ENCODE measurements at regions of chr5 and their contacts with region 1.

Region 1: GRCh38 chr5:176887252-176887849 is 11.8 kb downstream of the HK3 start:
- DNase-seq: no peak
- H3K4me3 ChIP-seq: no peak overlapping the region
- H3K27ac ChIP-seq: no peak overlapping the region
- H3K4me1 ChIP-seq: no peaks in the 10 kb centered on the region
- H3K27me3 ChIP-seq: no peaks in the 10 kb centered on the region
- CTCF ChIP-seq: peak in 2 of 3 experiments; percentile 45 to 50; a peak in 2 of 4 replicates
- EP300 ChIP-seq: no peak
- POLR2A ChIP-seq: no peak
- RAD21 ChIP-seq: peak; percentile 58 to 69

Region 2: DNA sequence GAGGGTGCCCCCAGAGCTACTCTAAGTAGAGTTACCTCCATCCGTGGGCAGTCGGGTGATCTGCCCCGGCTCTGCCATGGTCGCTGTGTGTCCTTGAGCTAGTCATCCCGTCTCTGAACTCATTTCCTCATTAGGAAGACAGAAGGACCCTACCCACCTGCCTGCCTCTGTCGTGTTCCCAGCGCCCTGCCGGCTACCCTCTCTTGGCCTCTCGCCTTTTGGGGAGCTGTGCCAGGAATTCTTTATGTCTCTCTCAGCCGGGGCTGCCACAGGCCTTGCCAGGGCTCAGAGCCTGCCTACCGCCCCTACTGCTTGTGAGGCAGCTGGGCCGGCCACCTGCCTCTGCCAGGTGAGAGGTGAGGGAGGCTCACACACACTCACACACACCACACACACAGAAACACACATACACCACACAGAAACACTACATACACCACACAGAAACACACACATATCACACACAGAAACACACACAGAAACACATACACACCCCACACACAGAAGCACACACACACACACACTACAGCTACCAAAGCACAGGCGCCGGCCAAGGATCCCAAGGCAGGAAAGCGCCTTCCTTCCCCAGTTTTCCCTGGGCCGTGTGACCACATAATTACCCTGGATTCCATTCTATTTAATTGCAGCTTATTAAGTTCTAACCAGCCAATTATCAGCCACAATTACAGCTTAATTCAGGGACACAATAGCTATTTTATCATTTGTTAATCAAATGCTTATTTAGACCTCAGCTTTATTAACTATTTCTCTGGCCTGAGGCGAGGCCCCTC is 35.3 kb before region 1 on chr5:
- CTCF ChIA-PET with region 1: no interaction called
- POLR2A ChIA-PET with region 1: no interaction called
- DNase-seq: no peak
- H3K4me3 ChIP-seq: no peak overlapping the region
- H3K27ac ChIP-seq: no peak overlapping the region; the same call in 1 of the 2 replicates
- H3K4me1 ChIP-seq: peaks cover 0 to 1% (median under 1%) of the 10 kb centered on the region in 4 experiments; a peak in 2 of 7 replicates
- H3K27me3 ChIP-seq: no peaks in the 10 kb centered on the region
- CTCF ChIP-seq: no peak
- EP300 ChIP-seq: no peak
- POLR2A ChIP-seq: no peak
- RAD21 ChIP-seq: no peak

Region 3: GRCh38 chr5:176875783-176876505 is 11.4 kb before region 1 on chr5:
- CTCF ChIA-PET with region 1: interaction called, 34 read pairs
- POLR2A ChIA-PET with region 1: interaction called, 4 read pairs
- DNase-seq: no peak
- H3K4me3 ChIP-seq: no peak overlapping the region
- H3K27ac ChIP-seq: no peak overlapping the region
- H3K4me1 ChIP-seq: peaks cover 0 to 4% (median 1%) of the 10 kb centered on the region in 4 experiments; a peak in 3 of 7 replicates
- H3K27me3 ChIP-seq: no peaks in the 10 kb centered on the region
- CTCF ChIP-seq: no peak
- EP300 ChIP-seq: no peak
- POLR2A ChIP-seq: no peak
- RAD21 ChIP-seq: no peak

Region 4: DNA sequence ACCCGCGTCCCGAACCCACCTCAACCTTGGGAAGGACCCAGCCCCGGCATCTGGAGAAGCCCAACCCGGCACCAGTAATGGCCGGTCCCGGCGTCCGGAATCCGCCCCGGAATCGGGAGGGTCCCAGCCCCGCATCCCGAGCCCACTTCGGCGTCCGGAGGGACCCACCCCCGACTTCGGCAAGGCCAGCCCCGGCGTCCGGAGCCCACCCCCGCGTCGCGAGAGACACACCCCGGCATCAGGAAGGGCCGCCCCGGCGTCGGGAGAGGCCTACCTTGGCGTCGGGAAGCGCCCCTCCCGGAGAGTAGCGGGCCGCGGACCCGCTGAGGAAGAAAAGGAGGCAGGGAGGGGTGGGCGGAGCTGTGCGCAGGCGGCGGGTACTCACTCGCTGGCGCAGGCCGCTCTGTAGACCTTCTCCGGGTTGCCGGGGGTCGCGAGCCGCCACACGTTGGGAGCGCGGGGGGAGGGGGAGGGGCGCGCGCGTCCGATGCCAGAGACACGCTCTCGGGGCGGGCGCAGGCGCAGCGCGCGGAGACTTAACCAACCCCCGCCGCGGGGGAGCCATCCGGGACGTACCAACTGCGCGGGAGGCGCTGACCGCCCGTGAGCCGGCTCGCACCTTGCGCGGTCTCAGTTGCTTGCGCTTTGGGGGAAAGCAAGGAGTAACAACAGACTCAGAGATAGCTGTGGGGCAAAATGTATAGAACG is 119.1 kb after region 1 on chr5 and contains the start of gene UIMC1:
- CTCF ChIA-PET with region 1: no interaction called
- POLR2A ChIA-PET with region 1: no interaction called
- DNase-seq: peak; percentile 83 to 99
- H3K4me3 ChIP-seq: peak within 1 kb of the TSS; percentile 72 to 85 (median 80)
- H3K27ac ChIP-seq: peak within 1 kb of the TSS; percentile 89
- H3K4me1 ChIP-seq: peaks cover 0 to 3% (median 3%) of the 10 kb centered on the region in 4 experiments; a peak in 4 of 7 replicates
- H3K27me3 ChIP-seq: no peaks in the 10 kb centered on the region
- CTCF ChIP-seq: no peak
- EP300 ChIP-seq: peak in 1 of 2 experiments; percentile 100; a peak in 2 of 3 replicates
- POLR2A ChIP-seq: peak; percentile 49 to 52; a peak in 2 of 3 replicates
- RAD21 ChIP-seq: no peak; a peak in 1 of 4 replicates
- total RNA-seq, gene UIMC1: 43.0 and 43.7 TPM in 2 replicates